GM13976 (cell line): ENCODE measurements at regions of chr18 and their contacts with region 1.

Region 1: GRCh38 chr18:62957885-62958472 is 242.6 kb downstream of the PHLPP1 start:
- DNase-seq: no peak
- CTCF ChIP-seq: peak; percentile 39

Region 2: GRCh38 chr18:62714671-62715435 is 243.1 kb before region 1 on chr18:
- in situ Hi-C with region 1: loop called (anchors 10 kb)
- DNase-seq: peak; percentile 94
- CTCF ChIP-seq: peak; percentile 65

Region 3: DNA sequence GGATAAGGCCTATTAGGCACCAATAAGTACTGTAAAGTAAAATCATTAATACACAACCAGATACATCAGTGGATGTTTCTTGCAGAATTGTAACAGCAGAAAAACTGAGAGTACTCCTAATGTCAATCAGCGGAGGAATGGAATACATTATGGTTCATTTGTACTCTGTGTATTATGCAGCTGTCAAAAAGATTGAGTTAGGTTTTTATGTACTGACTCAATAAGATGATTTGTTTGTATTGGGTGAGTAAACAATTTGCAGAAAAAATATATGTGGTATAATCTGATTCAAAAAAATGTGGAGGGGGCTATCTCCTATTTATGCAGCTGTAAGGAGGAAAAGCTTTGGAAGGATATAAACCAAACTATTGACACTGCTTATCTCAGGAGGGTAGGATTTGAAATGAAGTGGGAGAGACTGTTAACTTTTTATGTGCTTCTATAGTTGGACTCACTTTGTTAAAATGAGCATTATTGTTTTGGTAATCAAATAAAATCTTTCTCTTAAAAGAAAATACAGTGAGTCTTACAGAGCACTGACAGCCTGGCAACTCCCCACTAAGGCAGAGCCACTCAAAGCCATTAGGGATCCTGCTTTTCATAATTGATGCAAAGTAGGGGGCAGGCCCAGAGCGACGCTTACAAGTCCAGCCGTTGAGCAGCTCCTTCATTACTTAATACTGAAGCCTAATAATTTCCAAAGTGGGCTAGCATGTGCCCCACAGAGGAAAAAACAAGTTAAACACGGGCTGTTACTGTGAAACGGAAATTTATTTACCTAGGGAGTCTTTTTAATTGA is 73.8 kb before region 1 on chr18:
- in situ Hi-C with region 1: no loop called
- DNase-seq: no peak
- CTCF ChIP-seq: no peak

Region 4: DNA sequence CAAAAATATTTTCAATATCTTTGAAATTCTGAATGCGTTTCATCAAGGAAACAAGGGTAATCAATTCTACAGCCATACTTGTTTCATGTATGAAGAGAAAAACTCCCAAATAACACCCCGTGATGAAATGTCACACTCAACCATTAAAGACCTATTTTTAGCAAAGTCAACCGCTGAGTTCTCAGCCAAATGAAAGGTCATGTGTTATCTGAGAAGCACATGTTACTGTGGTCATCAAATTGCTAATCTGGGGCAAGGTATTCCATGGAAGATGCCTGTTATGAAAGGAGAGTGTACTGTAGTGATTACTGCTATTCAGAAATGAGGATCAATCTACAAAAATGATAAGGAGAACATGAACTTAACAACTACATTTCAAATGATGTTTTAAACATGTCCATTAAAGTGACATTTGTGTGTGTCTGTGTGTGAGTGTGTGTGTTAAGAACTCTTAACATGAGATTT is 234.9 kb after region 1 on chr18:
- in situ Hi-C with region 1: no loop called
- DNase-seq: no peak
- CTCF ChIP-seq: no peak

Region 5: GRCh38 chr18:64713284-64713683 is 1755.3 kb after region 1 on chr18:
- in situ Hi-C with region 1: no loop called
- DNase-seq: no peak
- CTCF ChIP-seq: no peak